ENCODE measurements at regions of chr1 and their contacts with region 1.

Region 1: GRCh38 chr1:19439464-19440171 is 45.7 kb downstream of the CAPZB start:
- DNase-seq: peak in 8 of 9 donors; percentile 22 to 64 (median 55)
- ATAC-seq: peak; percentile 60
- H3K4me3 ChIP-seq: no peak overlapping the region
- H3K4me3 Mint-ChIP-seq: peak overlapping the region; percentile 23 to 68 (median 46)
- H3K27ac ChIP-seq: peak overlapping the region; percentile 36
- H3K27ac Mint-ChIP-seq: peak overlapping the region; percentile 63 to 90 (median 75)
- H3K4me1 ChIP-seq: peaks cover 30 to 66% of the 10 kb centered on the region in 2 donors
- H3K4me1 Mint-ChIP-seq: peaks cover 64 to 98% (median 89%) of the 10 kb centered on the region in 7 donors
- H3K27me3 ChIP-seq: no peaks in the 10 kb centered on the region
- H3K27me3 Mint-ChIP-seq: no peaks in the 10 kb centered on the region

Region 2: GRCh38 chr1:19462781-19463503 is 23.3 kb after region 1 on chr1:
- CTCF ChIA-PET with region 1: interaction called, 13 read pairs
- POLR2A ChIA-PET with region 1: interaction called, 5 read pairs
- intact Hi-C with region 1: loop called in 1 of 2 experiments (anchors 2 kb)
- DNase-seq: peak in 7 of 9 donors; percentile 69 to 88 (median 82)
- ATAC-seq: peak; percentile 90
- H3K4me3 ChIP-seq: peak overlapping the region; percentile 49
- H3K4me3 Mint-ChIP-seq: peak overlapping the region; percentile 66 to 87 (median 82)
- H3K27ac ChIP-seq: peak overlapping the region; percentile 84
- H3K27ac Mint-ChIP-seq: peak overlapping the region; percentile 86 to 98 (median 95)
- H3K4me1 ChIP-seq: peaks cover 88 to 92% of the 10 kb centered on the region in 2 donors
- H3K4me1 Mint-ChIP-seq: peaks cover 59 to 94% (median 84%) of the 10 kb centered on the region in 7 donors
- H3K27me3 ChIP-seq: no peaks in the 10 kb centered on the region
- H3K27me3 Mint-ChIP-seq: no peaks in the 10 kb centered on the region

Region 3: DNA sequence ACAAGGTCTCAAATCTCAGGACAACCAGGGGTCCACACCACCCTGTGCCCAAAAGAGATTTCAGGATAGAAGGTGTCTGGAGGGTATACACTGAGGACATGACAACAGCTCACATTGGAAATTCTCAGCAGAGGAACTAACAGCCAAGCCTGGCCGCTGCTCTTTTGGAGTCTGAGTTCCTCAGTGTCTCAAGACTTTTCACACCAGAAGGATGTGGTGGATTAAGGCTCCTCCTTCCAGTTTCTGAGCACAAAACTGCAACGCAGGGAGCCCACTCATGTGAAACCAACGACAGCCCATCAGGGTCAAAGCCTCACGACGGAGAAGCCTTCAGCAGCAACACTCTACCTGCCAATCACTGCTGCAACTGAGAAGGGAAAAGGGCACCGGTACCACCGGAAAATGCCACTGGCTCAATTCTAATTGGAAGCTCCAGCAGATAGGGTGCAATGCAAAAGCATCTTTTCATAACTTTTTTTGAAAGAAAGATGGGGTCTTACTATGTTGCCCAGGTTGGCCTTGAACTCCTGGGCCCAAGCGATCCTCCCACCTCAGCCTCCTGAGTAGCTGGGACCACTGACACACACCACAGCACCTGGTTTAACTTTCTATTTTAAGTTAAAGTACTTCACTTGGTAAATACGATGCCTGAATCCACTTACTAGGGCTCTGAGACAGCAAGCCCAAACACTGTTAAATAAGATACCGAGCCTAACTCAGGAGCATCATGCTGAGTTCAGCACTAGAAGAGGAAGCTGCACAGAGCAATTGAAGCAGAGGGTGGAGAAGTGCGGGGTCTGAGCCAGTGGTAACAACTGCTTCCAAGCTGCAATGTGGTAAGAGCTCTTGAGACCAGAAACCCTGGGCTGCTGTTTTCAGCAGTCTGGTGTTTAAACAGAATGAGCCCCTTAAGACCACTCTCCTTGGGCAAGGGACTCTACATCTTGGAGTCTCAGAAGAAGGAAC is 37.9 kb after region 1 on chr1:
- CTCF ChIA-PET with region 1: interaction called, 12 read pairs
- POLR2A ChIA-PET with region 1: interaction called, 3 read pairs
- intact Hi-C with region 1: loop called in 1 of 2 experiments (anchors 5 kb)
- DNase-seq: peak in 4 of 9 donors; percentile 29 to 45 (median 34)
- ATAC-seq: peak; percentile 68
- H3K4me3 ChIP-seq: peak overlapping the region; percentile 50
- H3K4me3 Mint-ChIP-seq: peak overlapping the region; percentile 81 to 98 (median 88)
- H3K27ac ChIP-seq: peak overlapping the region; percentile 75
- H3K27ac Mint-ChIP-seq: peak overlapping the region; percentile 86 to 97 (median 91)
- H3K4me1 ChIP-seq: peaks cover 88 to 92% of the 10 kb centered on the region in 2 donors
- H3K4me1 Mint-ChIP-seq: peaks cover 72 to 99% (median 95%) of the 10 kb centered on the region in 7 donors
- H3K27me3 ChIP-seq: no peaks in the 10 kb centered on the region
- H3K27me3 Mint-ChIP-seq: no peaks in the 10 kb centered on the region

Region 4: DNA sequence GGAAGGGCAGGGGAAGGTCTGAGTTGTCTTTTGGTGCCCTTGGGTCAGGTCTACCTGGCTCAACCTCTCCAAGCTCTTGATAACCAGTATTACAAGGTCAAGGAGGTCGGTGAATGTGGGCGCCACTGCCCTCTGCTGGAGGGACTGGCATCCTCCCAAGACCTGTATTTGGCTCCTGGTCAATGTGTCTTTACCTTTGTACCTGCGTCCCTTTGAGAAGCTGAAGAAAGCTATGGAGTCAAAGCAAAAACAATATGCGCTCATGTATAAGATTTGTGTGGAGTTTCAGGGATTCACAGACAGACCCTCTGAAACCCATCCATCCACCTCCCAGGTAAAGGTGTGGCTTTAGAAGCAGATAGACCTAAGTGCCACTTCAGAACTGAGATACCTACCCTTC is 142.7 kb after region 1 on chr1:
- CTCF ChIA-PET with region 1: interaction called, 53 read pairs
- POLR2A ChIA-PET with region 1: interaction called, 3 read pairs
- intact Hi-C with region 1: loop called in 1 of 2 experiments (anchors 1 kb)
- DNase-seq: peak; percentile 37 to 72 (median 59)
- ATAC-seq: peak; percentile 94
- H3K4me3 ChIP-seq: no peak overlapping the region
- H3K4me3 Mint-ChIP-seq: no peak overlapping the region
- H3K27ac ChIP-seq: no peak overlapping the region
- H3K27ac Mint-ChIP-seq: peak overlapping the region in 2 of 9 donors; percentile 15 to 76
- H3K4me1 ChIP-seq: no peaks in the 10 kb centered on the region
- H3K4me1 Mint-ChIP-seq: peaks cover 5 to 15% (median 12%) of the 10 kb centered on the region in 7 donors
- H3K27me3 ChIP-seq: no peaks in the 10 kb centered on the region
- H3K27me3 Mint-ChIP-seq: peaks cover 0 to 8% (median 0%) of the 10 kb centered on the region in 5 donors

Region 5: GRCh38 chr1:19668893-19669292 is 229.3 kb after region 1 on chr1:
- CTCF ChIA-PET with region 1: no interaction called
- POLR2A ChIA-PET with region 1: no interaction called
- intact Hi-C with region 1: no loop called
- DNase-seq: no peak
- ATAC-seq: no peak
- H3K4me3 ChIP-seq: no peak overlapping the region
- H3K4me3 Mint-ChIP-seq: no peak overlapping the region
- H3K27ac ChIP-seq: no peak overlapping the region
- H3K27ac Mint-ChIP-seq: peak overlapping the region in 3 of 9 donors; percentile 9 to 53 (median 50)
- H3K4me1 ChIP-seq: peaks cover 6 to 7% of the 10 kb centered on the region in 2 donors
- H3K4me1 Mint-ChIP-seq: peaks cover 6 to 31% (median 19%) of the 10 kb centered on the region in 7 donors
- H3K27me3 ChIP-seq: no peaks in the 10 kb centered on the region
- H3K27me3 Mint-ChIP-seq: peaks cover 0 to 58% (median 34%) of the 10 kb centered on the region in 5 donors